Right ventricle myocardium inferior (tissue), 1 donor: ENCODE measurements at regions of chr12 and their contacts with region 1.

Region 1: GRCh38 chr12:43957732-43958372 is 122.0 kb downstream of the TMEM117 start:
- DNase-seq: no peak
- ATAC-seq: no peak

Region 2: GRCh38 chr12:43980627-43981196 is 22.9 kb after region 1 on chr12:
- intact Hi-C with region 1: loop called (anchors 2 kb)
- DNase-seq: no peak
- ATAC-seq: no peak

Region 3: DNA sequence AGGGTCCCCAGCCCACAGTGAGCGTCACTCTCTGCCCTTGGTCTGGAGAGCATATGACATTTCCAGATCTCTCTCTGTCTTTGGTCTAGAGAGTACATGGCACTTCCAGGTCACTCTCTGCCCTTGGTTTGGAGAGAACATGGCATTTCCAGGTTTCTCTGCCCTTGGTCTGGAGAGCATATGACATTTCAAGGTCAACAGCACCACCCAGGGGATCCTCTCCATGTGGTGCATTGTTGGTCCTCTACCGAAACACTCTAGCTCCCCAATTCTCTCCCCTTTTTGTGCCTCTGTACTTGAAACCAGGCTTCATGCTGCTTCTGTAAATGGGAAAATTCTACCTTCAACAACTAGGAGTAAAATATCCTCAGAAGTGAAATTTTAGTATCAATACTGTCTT is 518.8 kb after region 1 on chr12:
- intact Hi-C with region 1: no loop called
- DNase-seq: no peak
- ATAC-seq: no peak

Region 4: DNA sequence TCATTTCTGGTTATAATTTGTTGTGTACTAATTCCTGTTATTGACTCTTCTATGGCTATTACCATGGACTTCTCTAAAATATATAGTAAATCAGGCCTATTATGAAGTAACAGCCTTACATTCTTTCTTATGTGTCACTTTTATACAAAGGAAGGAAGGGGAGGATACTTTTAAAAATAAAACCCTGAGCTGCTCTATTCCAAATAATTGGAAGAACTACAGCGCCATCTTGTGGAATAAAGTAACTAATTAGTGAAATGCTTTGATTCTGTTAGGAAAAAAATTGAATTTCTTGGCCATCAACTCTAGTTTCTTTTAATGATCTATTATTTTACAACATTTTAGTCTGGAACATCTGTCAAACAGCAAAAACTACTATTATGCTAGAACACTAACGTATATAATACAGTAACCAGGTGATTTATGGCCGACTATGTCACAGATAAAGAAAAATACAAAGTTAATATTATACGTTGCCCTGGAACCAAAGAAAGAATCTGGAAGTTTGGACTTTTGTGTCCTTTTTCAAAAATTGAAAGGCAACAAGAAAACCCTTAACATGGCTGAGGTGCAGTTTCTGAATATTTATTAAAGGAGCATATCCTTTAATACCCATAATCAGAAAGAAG is 973.2 kb after region 1 on chr12:
- intact Hi-C with region 1: loop called (anchors 5 kb)
- DNase-seq: no peak
- ATAC-seq: no peak